Vagina (tissue), 2 donors: ENCODE measurements at regions of chr11 and their contacts with region 1.

Region 1: GRCh38 chr11:70467201-70468085 is 69.1 kb downstream of the CTTN start:
- DNase-seq: no peak
- H3K4me3 ChIP-seq: no peak overlapping the region
- H3K27ac ChIP-seq: no peak overlapping the region
- H3K4me1 ChIP-seq: no peaks in the 10 kb centered on the region
- H3K27me3 ChIP-seq: no peaks in the 10 kb centered on the region
- CTCF ChIP-seq: peak; percentile 37 to 67 (median 66)
- POLR2A ChIP-seq: no peak

Region 2: DNA sequence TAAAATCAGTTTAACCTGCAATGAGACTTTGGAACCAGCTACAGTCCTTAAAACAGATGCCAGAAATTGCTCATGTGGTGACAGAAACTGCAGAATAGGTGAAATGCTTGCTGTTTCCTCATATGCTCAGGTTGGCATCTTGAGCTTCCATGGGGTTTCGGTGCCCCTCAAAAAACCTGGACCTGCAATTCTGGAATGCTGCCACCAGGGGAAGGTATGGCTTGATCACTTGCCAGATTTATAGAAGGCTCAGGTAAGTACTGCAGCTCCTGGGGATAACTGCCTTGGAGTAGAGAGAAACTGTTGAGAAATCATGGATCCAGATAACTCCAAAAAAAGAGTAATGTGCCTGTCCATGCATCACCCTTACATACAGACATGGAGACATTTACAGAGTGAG is 43.9 kb after region 1 on chr11:
- intact Hi-C with region 1: no loop called
- DNase-seq: no peak
- H3K4me3 ChIP-seq: no peak overlapping the region
- H3K27ac ChIP-seq: no peak overlapping the region
- H3K4me1 ChIP-seq: no peaks in the 10 kb centered on the region
- H3K27me3 ChIP-seq: no peaks in the 10 kb centered on the region
- CTCF ChIP-seq: no peak
- POLR2A ChIP-seq: no peak

Region 3: DNA sequence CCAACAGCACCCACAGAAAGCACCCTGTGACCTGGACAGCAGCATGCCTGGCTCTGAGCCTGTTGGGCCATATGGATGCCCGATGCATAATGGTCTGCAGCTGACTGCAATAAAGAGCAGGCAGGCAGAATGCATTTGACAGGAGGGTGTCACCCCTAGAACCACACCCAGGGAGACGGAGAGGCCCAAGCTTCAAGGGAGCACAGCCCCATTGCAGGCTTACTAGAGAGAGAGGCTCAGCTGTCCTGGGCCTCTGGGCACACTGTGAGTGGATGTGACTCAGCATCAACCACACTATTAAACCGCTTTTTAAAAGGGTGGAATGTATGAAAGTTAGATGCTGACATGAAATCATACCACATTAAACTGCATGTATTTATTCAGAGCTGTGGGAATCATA is 296.2 kb after region 1 on chr11:
- intact Hi-C with region 1: loop called (anchors 10 kb)
- DNase-seq: no peak
- H3K4me3 ChIP-seq: no peak overlapping the region
- H3K27ac ChIP-seq: no peak overlapping the region
- H3K4me1 ChIP-seq: no peaks in the 10 kb centered on the region
- H3K27me3 ChIP-seq: no peaks in the 10 kb centered on the region
- CTCF ChIP-seq: no peak
- POLR2A ChIP-seq: no peak

Region 4: DNA sequence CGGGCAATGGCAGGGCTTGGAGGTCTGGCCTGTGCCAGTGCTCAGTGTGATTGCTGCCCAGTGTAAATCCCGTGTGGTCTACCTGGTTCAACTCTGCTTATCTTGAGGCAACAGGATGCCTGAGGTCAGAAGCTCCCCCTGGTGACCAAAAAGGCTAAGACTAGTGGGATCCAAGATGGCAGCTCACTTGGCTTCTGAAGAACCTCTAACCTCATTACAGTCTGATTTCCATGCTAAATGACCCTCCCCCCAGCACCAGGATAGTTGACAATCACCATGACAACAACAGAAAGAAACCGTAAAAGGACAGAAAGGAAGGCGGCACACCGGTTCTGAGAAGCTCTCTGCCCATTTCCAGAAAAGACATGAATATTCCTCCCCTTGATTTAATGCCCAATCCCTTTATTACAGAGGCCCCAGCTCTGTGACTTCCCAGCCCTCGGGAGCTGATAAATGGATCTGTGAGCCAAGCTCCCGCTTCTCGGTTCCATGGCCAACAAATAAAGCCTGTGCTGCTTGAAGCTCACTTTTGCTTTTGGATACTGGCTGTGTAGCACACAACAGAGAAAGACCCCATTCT is 329.3 kb after region 1 on chr11:
- intact Hi-C with region 1: no loop called
- DNase-seq: no peak
- H3K4me3 ChIP-seq: no peak overlapping the region
- H3K27ac ChIP-seq: no peak overlapping the region
- H3K4me1 ChIP-seq: no peaks in the 10 kb centered on the region
- H3K27me3 ChIP-seq: no peaks in the 10 kb centered on the region
- CTCF ChIP-seq: no peak
- POLR2A ChIP-seq: no peak